ENCODE measurements at regions of chr9 and their contacts with region 1.

Region 1: DNA sequence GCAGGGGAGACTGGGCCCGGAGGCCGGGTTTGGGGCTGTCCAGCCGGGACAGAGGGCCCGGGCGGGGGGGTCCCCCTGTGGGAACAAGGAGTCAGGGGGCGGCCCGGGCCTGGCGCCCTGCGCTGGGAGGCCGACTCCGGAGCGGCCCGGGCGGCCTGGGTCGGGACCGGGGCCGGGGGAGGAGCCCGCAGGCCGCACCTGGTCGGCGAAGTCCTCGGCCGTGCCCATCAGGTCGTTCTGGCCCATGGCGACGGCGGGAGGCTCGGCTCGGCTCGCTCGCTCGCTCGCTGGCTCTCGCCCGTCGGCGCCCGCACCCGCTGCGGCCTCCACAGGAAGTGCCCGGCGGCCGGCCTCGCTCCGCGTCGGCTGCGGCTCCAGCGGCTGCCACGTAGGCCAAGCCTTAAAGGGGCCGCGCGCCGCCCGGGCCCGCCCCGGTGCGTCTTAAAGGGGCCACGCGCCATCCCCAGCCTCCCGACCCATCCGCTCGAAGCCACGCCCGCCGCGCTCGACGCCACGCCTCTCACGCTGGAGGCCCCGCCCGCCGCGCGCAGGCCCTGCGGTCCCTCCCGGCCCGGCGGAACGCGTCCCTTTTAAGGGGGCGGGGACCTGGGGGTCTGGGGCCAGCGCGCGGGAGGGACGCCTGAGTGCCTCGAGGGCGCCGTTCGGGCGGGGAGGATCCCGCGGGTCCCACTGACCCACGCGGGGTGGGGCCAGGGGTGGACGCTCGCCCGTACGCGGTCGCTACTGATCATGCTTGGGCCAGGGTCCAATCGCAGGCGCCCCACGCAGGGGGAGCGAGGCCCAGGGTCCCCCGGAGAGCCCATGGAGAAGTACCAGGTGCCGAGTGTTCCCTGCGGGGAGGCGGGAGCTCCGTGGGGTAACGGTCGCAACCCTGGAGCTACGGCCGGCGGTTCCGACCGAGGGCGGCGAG is at the starts of genes STKLD1 and SURF4:
- DNase-seq: peak; percentile 97
- H3K4me3 Mint-ChIP-seq: peak within 1 kb of the TSS; percentile 97
- H3K27ac Mint-ChIP-seq: peak within 1 kb of the TSS; percentile 96
- H3K4me1 Mint-ChIP-seq: peaks cover 35% of the 10 kb centered on the region
- H3K27me3 Mint-ChIP-seq: no peaks in the 10 kb centered on the region
- total RNA-seq, gene STKLD1: 0.69 to 0.90 TPM
- total RNA-seq, gene SURF4: 358 to 368 TPM

Region 2: DNA sequence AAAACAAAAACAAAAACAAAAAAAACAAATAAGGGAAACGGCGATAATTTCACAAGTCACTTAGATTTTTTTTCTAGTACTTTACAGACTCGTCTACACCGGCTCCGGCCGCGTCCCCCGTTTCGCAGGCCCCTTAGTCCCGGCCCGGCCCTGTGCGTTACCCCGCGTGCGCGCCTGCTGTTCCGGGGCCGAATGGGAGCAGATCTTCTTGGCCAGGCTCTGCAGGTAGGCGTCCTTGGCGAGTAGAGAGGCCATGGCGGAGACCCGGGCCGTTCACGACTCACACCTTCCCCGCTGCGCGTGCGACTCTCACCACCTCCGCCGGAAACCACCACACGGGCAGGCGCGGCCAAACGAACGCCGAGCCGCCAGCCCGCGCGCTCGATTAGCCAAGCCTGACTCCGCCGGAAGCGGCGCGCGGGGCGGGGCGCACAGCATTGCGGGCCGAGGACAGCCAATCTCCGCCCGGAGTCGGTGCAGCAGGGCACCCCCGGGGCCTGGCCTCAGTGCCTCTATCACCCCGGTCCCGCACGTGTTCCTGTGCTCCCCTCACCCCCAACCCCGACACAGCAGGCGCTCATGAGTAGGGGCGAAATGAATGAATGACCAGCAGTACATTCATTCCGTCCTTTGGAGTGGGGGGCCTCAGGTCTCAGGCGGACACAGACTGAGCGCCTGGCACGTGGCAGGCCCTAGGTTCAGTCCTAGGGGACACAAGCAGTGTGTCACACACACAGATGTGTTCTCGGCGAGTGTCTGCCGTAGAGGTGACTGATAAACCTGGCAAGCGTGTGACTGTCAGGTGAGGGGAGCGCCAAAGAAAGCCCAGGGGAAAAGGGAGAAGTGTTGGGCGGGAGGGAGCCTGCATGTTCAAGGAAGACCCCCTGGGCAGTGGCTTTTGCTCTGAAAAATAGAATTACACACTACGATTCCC is 39.8 kb before region 1 on chr9 and contains the start of gene SURF6:
- CTCF ChIA-PET with region 1: interaction called, 5 read pairs
- POLR2A ChIA-PET with region 1: interaction called, 3 read pairs
- intact Hi-C with region 1: loop called (anchors 1 kb)
- DNase-seq: peak; percentile 96
- H3K4me3 Mint-ChIP-seq: peak within 1 kb of the TSS; percentile 96
- H3K27ac Mint-ChIP-seq: peak within 1 kb of the TSS; percentile 91
- H3K4me1 Mint-ChIP-seq: peaks cover 35% of the 10 kb centered on the region
- H3K27me3 Mint-ChIP-seq: no peaks in the 10 kb centered on the region
- total RNA-seq, gene SURF6: 16.9 to 18.2 TPM

Region 3: GRCh38 chr9:133356391-133357091 is 19.4 kb before region 1 on chr9 and contains the starts of genes SURF1 and SURF2:
- CTCF ChIA-PET with region 1: interaction called, 76 read pairs
- POLR2A ChIA-PET with region 1: interaction called, 381 read pairs
- intact Hi-C with region 1: loop called (anchors 1 kb)
- DNase-seq: peak; percentile 93
- H3K4me3 Mint-ChIP-seq: peak within 1 kb of the TSS; percentile 84
- H3K27ac Mint-ChIP-seq: peak within 1 kb of the TSS; percentile 81
- H3K4me1 Mint-ChIP-seq: peaks cover 53% of the 10 kb centered on the region
- H3K27me3 Mint-ChIP-seq: no peaks in the 10 kb centered on the region
- total RNA-seq, gene SURF1: 24.7 to 26.0 TPM
- total RNA-seq, gene SURF2: 12.5 to 15.5 TPM

Region 4: GRCh38 chr9:133417541-133418461 is 41.8 kb after region 1 on chr9 and contains the start of gene REXO4:
- CTCF ChIA-PET with region 1: interaction called, 6 read pairs
- POLR2A ChIA-PET with region 1: interaction called, 15 read pairs
- intact Hi-C with region 1: loop called (anchors 2 kb)
- DNase-seq: peak; percentile 92
- H3K4me3 Mint-ChIP-seq: peak within 1 kb of the TSS; percentile 92
- H3K27ac Mint-ChIP-seq: peak within 1 kb of the TSS; percentile 88
- H3K4me1 Mint-ChIP-seq: peaks cover 59% of the 10 kb centered on the region
- H3K27me3 Mint-ChIP-seq: no peaks in the 10 kb centered on the region
- total RNA-seq, gene REXO4: 24.2 to 26.3 TPM

Region 5: DNA sequence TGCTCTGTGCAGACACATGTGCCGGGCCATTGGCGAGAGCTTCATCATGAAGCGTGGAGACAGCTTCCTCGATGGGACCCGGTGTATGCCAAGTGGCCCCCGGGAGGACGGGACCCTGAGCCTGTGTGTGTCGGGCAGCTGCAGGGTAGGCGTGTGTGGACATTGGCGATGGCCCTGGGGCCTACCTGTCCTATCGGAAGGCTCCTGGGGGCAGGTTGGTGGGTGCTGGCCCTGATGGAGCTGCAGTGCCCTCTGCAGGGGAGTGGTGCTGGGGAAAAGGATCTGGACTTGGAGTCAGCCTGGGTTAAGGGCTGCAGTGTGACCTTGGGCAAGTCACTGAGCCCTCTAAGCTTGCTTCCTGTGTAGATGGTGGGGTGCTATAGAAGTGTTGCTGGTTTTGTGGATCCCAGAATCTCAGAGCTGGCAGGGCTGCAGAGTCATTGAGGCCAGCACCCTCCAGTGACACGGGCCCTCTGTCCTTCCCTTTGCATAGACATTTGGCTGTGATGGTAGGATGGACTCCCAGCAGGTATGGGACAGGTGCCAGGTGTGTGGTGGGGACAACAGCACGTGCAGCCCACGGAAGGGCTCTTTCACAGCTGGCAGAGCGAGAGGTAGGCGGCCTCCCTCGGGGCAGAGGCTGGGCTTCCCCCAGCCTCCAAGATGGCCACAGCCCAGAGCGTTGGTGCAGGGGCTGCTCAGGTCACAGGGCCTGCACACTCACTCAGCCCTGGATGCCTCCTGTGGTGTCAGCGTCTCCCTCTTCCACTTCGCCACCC is 62.0 kb after region 1 on chr9:
- CTCF ChIA-PET with region 1: no interaction called
- POLR2A ChIA-PET with region 1: no interaction called
- intact Hi-C with region 1: no loop called
- DNase-seq: no peak
- H3K4me3 Mint-ChIP-seq: no peak overlapping the region
- H3K27ac Mint-ChIP-seq: no peak overlapping the region
- H3K4me1 Mint-ChIP-seq: no peaks in the 10 kb centered on the region
- H3K27me3 Mint-ChIP-seq: no peaks in the 10 kb centered on the region

Region 6: DNA sequence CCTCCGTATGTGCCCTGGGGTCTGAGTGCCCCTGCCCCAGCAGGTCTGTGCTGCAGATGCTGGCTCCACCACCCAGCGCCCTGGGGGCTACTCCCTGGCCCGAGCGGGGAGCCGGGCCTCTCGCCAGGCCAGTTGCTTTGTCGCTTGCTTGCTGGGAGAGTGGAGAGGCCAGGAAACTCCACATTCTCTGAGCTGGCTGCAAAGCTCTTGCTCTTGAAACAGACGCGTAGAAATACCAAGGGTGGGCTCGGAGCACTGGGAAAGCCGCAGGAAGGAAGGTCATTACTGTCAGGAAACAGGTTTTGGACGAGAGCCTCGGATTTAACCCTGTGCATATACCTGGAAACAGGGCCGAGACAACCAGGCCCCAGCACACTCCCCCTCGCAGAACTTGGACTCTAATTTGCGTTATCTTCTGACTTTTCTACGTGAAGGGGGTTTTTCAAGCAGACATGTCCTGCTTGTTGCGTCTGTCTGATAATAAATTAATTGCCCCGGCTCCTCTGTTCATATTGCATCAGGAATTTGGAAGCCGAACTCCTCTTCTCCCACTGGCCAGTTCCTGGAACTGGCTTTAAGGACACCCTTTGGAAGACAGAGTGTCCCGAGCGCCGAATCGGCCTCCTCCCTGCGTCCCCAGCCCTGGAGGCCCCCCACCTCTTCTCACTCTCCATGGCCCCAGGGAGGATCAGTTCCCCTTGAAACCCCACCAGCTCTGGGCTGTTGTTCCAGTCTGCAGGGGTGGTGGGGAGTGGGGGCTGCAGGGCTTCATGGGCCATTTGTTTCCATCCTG is 169.7 kb after region 1 on chr9:
- CTCF ChIA-PET with region 1: no interaction called
- POLR2A ChIA-PET with region 1: no interaction called
- intact Hi-C with region 1: no loop called
- DNase-seq: no peak
- H3K4me3 Mint-ChIP-seq: no peak overlapping the region
- H3K27ac Mint-ChIP-seq: no peak overlapping the region
- H3K4me1 Mint-ChIP-seq: no peaks in the 10 kb centered on the region
- H3K27me3 Mint-ChIP-seq: peaks cover under 1% of the 10 kb centered on the region

Region 7: DNA sequence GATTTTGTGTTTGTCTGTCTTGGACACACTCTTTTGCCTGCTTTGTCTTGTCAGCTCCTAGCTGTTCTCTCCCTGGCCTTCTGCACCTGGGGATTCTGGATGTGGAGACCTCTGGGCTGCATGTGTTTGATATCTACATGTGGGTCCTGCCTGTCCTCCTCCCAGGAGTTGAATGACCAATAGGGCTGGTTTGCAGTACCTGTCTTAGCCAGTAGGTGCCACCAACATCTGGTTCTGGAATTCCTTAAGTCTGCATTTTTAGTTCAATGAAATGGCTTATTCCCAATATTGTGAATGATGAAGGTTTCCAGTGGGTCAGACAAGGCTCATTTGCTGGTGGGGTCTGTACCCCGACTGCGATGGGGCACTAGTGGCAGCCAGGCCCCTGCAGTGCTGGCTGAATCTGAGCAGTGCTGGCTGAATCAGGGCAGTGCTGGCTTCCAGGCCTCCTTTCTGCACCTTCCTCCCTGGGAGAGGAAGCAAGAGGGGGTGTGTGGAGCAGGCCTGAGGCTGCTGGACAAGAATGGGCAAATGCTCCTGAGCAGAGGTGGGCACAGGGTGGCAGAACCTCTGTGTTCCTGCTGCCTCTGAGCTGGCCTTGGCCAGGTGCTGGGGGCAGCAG is 1023.6 kb after region 1 on chr9:
- CTCF ChIA-PET with region 1: no interaction called
- POLR2A ChIA-PET with region 1: no interaction called
- intact Hi-C with region 1: loop called (anchors 10 kb)
- DNase-seq: peak; percentile 37
- H3K4me3 Mint-ChIP-seq: no peak overlapping the region
- H3K27ac Mint-ChIP-seq: no peak overlapping the region
- H3K4me1 Mint-ChIP-seq: peaks cover 41% of the 10 kb centered on the region
- H3K27me3 Mint-ChIP-seq: no peaks in the 10 kb centered on the region